Endothelial cell of umbilical vein (primary cell): ENCODE measurements at regions of chr12 and their contacts with region 1.

Region 1: DNA sequence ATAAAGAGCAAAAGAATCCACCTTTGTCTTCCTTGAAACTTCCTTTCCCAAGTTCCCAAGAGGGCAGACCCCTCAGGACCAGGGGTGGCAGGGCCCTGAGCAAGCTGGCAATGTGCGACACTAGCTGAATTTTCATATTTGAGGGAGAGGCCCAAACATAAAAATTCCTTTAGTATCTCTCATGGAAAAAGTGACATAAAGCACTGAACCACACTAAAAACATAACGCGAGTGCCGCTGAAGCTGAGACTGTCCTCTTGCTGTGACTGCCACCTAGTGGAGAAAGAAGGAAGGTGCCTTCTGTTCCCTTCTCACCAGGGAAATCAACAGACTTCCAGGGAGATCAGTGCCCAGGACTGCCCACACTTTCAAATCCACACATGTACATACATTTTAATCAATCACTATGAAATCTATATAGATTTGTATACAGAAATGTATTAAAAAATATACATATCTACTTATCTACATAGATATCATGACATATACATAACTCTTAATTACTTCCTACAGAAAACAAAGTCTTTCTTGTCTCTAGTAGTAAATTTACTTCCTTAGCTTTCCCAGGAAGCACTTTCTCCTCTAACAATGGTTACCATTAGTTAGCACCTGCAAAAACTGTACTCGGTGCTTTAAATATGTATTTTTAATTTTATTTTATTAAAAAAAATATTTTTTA is 53.8 kb downstream of the SSH1 start:
- DNase-seq: peak; percentile 94
- H3K4me3 ChIP-seq: no peak overlapping the region
- H3K27ac ChIP-seq: peak overlapping the region; percentile 90
- H3K4me1 ChIP-seq: peaks cover 31% of the 10 kb centered on the region
- H3K27me3 ChIP-seq: no peaks in the 10 kb centered on the region
- CTCF ChIP-seq: peak; percentile 82 to 85
- POLR2A ChIP-seq: no peak

Region 2: GRCh38 chr12:108526482-108527165 is 276.9 kb before region 1 on chr12:
- CTCF ChIA-PET with region 1: no interaction called
- POLR2A ChIA-PET with region 1: no interaction called
- dilution Hi-C with region 1: no loop called
- intact Hi-C with region 1: no loop called
- DNase-seq: no peak
- H3K4me3 ChIP-seq: no peak overlapping the region
- H3K27ac ChIP-seq: no peak overlapping the region
- H3K4me1 ChIP-seq: no peaks in the 10 kb centered on the region
- H3K27me3 ChIP-seq: no peaks in the 10 kb centered on the region
- CTCF ChIP-seq: no peak
- POLR2A ChIP-seq: no peak

Region 3: GRCh38 chr12:108570743-108571608 is 232.6 kb before region 1 on chr12:
- CTCF ChIA-PET with region 1: interaction called, 29 read pairs
- POLR2A ChIA-PET with region 1: no interaction called
- dilution Hi-C with region 1: no loop called
- intact Hi-C with region 1: no loop called
- DNase-seq: peak; percentile 39
- H3K4me3 ChIP-seq: no peak overlapping the region
- H3K27ac ChIP-seq: no peak overlapping the region
- H3K4me1 ChIP-seq: peaks cover 8% of the 10 kb centered on the region
- H3K27me3 ChIP-seq: no peaks in the 10 kb centered on the region
- CTCF ChIP-seq: peak; percentile 8 to 13
- POLR2A ChIP-seq: no peak

Region 4: DNA sequence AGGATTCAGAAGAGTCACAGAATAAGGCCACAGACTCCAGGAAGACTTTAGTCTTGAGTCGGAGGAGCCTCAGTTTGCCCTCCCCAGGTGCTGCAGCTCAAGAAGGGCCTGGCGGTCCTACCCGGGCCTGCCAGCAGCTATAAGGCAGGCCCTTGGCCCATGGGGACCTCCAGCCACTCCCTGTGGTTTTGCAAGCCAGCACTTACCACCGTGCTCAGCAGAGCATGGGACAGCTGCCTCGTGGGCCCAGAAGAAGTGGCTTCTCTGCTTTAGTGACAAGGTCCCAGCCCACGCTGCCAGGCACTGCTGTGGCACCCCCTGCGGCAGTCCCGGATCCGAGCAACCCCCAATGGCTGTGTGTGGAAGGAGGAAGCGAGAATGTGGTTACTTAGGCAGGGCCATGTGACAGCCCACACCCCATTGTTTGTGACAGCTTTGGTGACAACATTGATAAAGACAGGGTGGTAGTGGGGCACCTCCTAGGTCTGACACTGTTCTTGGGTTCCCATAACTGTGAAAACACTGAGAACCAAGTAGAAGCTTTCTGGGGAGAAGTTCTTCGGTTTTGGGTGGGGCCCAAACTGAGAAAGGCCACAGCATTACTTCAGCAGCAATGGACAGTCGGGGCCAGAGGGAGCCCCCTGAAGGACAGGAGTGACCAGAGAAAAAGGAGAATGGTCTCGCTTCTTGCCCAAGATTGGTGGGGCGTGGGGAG is 169.9 kb before region 1 on chr12 and contains the start of gene SELPLG:
- CTCF ChIA-PET with region 1: interaction called, 13 read pairs
- POLR2A ChIA-PET with region 1: no interaction called
- dilution Hi-C with region 1: no loop called
- intact Hi-C with region 1: no loop called
- DNase-seq: no peak
- H3K4me3 ChIP-seq: no peak within 1 kb of the TSS
- H3K27ac ChIP-seq: no peak within 1 kb of the TSS
- H3K4me1 ChIP-seq: peaks cover 29% of the 10 kb centered on the region
- H3K27me3 ChIP-seq: no peaks in the 10 kb centered on the region
- CTCF ChIP-seq: no peak
- POLR2A ChIP-seq: no peak
- total RNA-seq, gene SELPLG: 0.62 and 1.2 TPM in 2 replicates

Region 5: DNA sequence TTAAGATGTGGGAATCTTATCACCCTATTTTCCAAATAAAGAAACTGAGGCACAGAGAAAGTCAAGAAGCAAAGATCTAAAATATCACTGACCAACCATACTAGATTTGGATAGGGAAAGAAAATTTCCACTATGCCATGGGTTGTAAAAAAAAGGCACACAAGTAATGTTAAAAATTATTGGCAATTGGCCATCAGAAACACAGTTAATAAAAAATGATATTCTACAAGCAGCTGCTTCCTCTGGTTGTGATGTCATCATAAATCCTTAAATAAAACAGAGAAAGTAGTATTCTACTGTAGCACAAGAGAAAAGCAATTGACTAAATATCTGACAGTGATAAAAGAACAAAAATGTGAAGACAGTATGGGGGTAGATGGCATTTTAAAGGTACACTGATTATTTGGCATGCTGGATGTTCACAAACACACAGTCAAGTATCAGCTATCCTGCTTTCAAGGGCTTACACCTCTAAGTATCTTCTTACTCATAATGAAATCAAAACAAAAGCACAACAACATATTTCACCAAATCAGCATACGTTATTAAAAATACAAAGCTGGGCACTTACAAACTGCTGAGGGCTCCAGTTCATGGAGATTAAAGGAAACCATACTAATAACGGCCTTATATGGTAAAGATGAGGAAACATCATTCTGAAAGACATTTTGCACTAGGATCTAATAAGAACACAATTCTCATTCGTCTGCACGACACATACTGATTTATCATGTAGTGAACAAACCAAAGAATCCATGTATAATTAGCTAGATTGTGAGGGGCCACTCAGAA is 117.9 kb before region 1 on chr12:
- CTCF ChIA-PET with region 1: interaction called, 20 read pairs
- POLR2A ChIA-PET with region 1: no interaction called
- dilution Hi-C with region 1: no loop called
- intact Hi-C with region 1: no loop called
- DNase-seq: peak; percentile 92
- H3K4me3 ChIP-seq: no peak overlapping the region
- H3K27ac ChIP-seq: peak overlapping the region; percentile 50
- H3K4me1 ChIP-seq: peaks cover 53% of the 10 kb centered on the region
- H3K27me3 ChIP-seq: no peaks in the 10 kb centered on the region
- CTCF ChIP-seq: no peak
- POLR2A ChIP-seq: no peak

Region 6: GRCh38 chr12:108816652-108817335 is 13.2 kb after region 1 on chr12:
- CTCF ChIA-PET with region 1: interaction called, 13 read pairs
- POLR2A ChIA-PET with region 1: interaction called, 8 read pairs
- dilution Hi-C with region 1: no loop called
- intact Hi-C with region 1: no loop called
- DNase-seq: no peak
- H3K4me3 ChIP-seq: no peak overlapping the region
- H3K27ac ChIP-seq: peak overlapping the region; percentile 29
- H3K4me1 ChIP-seq: peaks cover 32% of the 10 kb centered on the region
- H3K27me3 ChIP-seq: no peaks in the 10 kb centered on the region
- CTCF ChIP-seq: no peak
- POLR2A ChIP-seq: no peak

Region 7: DNA sequence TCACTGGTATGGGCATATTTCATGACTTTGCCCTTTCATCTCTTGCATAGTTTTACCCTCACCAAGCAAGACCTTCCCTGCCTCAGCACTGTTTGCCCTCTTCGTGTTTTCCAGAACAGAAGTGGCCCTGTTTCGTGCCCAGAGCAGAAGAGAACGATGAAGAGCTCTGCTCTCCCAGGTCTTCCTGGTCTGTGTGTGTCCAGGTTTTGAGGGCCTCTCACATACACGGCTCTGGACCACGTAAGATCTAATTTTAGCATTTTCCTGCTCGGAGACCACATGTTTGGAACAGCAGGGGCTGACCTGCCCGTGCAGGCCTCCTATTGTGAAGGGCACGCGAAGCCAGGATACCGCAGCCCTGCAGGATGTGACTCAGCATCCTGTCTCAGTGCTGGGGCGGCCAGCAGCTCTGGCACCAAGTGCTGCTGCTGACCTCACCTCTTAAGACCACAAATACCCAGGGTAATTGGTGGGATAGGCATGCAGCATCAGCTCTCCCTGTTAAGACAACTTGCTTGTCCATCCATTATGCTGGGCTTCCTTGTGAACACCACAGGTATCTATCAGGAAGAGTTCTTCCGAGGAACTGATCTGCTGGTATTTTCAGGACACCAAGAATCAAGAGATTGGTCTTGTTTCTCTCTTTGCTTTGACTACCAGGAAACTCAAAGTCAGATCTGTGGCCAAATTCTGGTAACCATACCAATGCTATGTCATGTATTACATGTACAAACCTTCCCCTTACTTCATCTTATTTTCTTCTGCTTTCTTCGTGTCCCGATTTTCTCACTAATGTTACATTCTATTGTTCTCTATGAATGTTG is 34.8 kb after region 1 on chr12:
- CTCF ChIA-PET with region 1: interaction called, 15 read pairs
- POLR2A ChIA-PET with region 1: interaction called, 4 read pairs
- dilution Hi-C with region 1: no loop called
- intact Hi-C with region 1: no loop called
- DNase-seq: peak; percentile 100
- H3K4me3 ChIP-seq: peak overlapping the region in 1 of 3 experiments; percentile 16
- H3K27ac ChIP-seq: peak overlapping the region; percentile 98
- H3K4me1 ChIP-seq: peaks cover 70% of the 10 kb centered on the region
- H3K27me3 ChIP-seq: no peaks in the 10 kb centered on the region
- CTCF ChIP-seq: no peak
- POLR2A ChIP-seq: peak; percentile 79

Region 8: DNA sequence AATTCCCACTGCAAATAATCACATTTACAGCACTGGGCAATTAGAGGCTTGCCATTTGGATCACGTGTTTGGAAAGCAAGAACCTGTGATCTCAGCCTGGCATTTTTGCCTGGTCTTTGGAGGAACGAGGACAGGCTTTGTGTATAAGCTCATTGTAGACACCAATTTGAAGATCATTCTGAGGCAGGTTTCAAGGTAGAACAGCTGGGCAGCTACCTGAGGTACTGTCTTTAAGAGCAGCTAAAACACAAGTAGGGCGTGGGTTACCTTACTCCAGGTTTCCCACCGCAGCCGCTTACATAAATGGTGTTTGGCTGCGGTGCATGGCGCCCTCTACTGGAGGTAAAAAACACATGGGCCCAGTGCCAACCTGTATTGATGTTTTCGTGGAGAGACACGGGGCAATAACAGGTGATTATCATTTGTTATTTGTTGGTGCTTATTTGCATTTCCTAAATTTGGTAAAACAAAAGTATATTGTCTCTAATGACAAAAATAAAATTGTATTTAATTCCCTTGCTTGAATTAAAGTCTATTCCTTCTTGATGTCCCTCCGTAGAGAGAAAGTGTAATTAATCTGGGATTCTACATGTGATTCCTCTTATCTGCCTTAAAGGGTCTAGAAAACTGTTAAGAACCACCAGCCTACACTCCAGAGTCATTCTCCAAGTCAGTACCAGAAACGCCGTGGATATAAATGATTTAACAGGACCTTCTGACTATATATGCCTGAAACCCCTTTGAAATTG is 147.6 kb after region 1 on chr12:
- CTCF ChIA-PET with region 1: interaction called, 45 read pairs
- POLR2A ChIA-PET with region 1: interaction called, 6 read pairs
- dilution Hi-C with region 1: no loop called
- intact Hi-C with region 1: loop called (anchors 1 kb)
- DNase-seq: peak; percentile 80
- H3K4me3 ChIP-seq: no peak overlapping the region
- H3K27ac ChIP-seq: no peak overlapping the region
- H3K4me1 ChIP-seq: no peaks in the 10 kb centered on the region
- H3K27me3 ChIP-seq: no peaks in the 10 kb centered on the region
- CTCF ChIP-seq: peak; percentile 74 to 80
- POLR2A ChIP-seq: no peak